ENCODE measurements at regions of chr20 and their contacts with region 1.

Region 1: DNA sequence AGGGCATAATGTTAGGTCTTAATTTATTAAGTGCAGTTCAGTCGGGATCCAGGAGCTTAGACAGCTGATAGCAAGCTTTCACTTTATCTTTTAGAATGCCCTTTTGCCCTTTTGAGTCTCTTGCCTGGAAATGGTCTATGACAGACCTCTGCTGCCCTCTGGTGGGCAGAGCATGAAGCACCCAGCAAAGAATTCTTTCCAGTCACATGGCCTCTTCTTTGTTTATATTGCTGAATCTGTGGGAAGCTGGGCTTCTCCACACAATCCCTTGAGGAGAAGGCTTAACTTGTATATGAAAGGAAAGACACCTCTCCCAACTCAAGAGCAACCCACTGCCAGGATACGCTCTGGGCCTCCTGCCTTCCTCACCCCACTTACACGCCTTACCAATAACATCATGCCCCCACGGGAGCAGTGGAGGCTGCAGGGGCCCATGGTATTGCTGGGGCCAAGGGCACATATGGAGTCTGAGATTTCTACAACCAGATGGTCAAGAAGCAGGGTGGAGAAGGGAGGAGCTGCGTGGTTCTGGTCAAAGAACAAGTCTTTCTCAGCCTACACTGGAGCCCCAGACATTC is 20.4 kb downstream of the WFDC3 start:
- DNase-seq: peak; percentile 26
- H3K4me3 ChIP-seq: no peak overlapping the region; the same call in 1 of the 2 replicates
- CTCF ChIP-seq: peak; percentile 79

Region 2: DNA sequence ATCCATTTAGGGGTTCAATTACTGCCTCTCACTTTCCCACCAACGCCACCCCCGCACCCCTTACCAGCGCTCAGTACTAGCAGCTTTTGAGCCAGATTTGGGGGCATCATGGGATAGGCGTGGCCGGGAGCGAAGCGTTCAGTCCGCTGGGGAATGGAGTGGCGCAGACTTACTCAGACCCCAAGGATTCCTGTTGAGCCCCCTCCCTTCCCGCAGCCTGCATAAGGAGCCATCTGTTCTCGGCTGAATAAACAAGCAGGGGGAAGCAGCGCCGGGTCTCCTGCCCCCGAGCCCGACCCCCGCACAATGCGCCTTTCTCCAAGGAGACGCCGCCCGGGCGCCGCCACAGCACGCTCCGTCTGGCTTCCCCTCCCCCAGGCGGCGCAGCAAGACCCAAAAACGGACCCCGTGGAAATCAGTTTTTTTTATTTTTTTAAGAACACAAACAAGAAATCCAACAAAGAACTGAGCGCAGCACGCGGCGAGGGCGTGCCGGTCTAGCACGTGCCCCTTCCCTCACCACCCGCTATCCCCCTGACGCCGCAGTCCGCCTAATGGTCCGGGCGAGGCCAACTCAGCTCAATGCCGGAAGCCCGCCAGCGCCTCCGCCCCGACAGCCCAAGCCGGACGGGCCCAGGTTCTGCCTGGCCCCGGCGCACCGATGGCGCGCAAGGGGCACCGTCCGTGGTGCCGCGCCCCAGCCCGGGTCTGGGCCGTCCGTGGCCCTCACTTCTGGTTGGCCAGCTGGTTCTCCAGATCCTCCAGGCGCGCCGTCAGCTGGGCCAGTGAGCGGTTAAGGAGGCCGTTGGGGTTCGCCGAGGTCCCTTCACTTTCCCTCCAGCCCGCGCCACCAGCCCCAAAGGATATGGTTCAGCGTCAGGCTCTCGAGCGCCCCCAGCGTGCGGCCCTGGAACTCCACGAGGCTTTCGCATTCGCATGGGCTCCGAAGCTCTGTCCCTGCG is 477.9 kb before region 1 on chr20:
- CTCF ChIA-PET with region 1: interaction called, 17 read pairs
- POLR2A ChIA-PET with region 1: no interaction called
- DNase-seq: no peak
- H3K4me3 ChIP-seq: peak overlapping the region; percentile 61
- CTCF ChIP-seq: peak; percentile 98

Region 3: GRCh38 chr20:45368221-45368980 is 402.9 kb before region 1 on chr20:
- CTCF ChIA-PET with region 1: interaction called, 41 read pairs
- POLR2A ChIA-PET with region 1: no interaction called
- DNase-seq: no peak
- H3K4me3 ChIP-seq: no peak overlapping the region
- CTCF ChIP-seq: no peak

Region 4: DNA sequence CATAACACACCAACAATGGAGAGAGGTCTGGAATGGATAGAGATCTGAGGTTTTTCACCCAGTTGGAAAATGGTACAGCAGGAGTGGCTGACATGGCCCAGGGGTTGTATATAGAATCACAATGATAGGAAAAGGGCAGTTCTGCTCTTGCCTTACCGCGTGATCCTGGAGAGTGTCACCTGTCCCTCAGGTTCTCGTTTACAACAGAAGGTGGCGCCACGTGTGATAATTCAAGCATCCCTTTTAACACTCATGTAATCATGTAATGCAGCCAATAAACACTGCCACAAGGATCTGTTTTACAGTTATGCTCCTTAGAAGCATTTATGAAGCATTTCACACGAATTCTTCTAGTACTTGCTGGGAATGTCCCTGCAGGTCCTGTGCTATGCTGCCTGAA is 314.6 kb before region 1 on chr20:
- CTCF ChIA-PET with region 1: interaction called, 28 read pairs
- POLR2A ChIA-PET with region 1: no interaction called
- DNase-seq: no peak
- H3K4me3 ChIP-seq: no peak overlapping the region
- CTCF ChIP-seq: no peak

Region 5: DNA sequence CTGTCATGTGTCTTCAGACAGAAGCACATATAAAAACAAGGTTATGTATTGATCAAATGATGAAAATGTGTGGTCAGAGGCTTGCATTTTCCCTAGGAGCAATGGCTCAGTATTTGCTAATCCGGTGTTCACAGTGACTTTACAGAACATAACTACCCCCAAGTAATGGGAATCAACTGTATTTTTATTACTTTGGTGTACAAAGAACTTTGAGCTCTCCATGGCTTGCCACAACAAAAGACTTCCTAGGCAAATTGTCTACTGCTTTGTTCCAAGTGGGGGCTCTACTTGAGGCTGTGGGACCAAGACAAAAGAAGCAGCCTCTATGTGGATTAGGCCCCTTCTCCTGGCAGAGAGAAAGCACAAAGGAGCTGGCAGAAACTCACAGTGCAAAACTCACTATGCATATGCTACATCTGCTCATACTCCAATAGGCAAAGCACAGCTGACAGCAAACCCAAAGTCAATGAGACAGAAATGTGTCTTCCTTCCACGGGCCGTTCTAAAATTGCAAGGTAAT is 193.1 kb before region 1 on chr20:
- CTCF ChIA-PET with region 1: interaction called, 13 read pairs
- POLR2A ChIA-PET with region 1: no interaction called
- DNase-seq: no peak
- H3K4me3 ChIP-seq: no peak overlapping the region
- CTCF ChIP-seq: no peak

Region 6: DNA sequence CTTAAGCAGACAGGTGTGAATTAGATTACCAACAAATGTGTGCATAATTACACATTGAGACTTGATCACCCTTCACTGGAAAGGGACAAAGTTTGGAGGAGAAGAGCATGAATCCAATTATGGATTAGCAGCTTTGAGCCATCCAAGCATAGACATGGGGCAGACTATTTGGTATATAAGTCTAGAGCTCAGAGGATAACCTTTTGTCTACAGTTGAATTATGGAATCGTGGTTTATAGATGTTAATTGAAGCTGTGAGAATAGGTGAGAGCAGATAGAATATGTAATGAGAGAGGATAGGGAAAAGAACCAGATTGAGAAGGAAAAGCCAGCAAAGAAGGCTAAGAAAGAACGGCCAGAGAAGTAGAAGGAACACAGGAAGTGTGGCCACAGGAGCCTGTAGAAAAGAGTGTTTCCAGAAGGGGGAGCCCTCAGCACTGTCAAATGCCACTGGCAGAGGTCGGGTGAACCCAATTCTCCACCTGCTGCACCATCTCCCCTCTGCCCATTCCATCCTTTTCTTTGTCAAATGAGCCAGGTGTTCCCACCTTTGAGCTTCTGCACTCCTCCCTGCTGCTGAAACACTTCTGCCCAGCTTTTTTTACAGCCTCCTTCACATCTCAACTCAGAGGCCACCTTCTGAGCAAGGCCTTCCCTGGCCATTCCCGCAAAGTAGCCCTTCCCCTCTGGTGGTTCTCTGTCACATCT is 27.8 kb after region 1 on chr20:
- CTCF ChIA-PET with region 1: interaction called, 10 read pairs
- POLR2A ChIA-PET with region 1: no interaction called
- DNase-seq: no peak
- H3K4me3 ChIP-seq: no peak overlapping the region
- CTCF ChIP-seq: peak; percentile 75

Region 7: GRCh38 chr20:46040902-46041535 is 269.7 kb after region 1 on chr20:
- CTCF ChIA-PET with region 1: no interaction called
- POLR2A ChIA-PET with region 1: no interaction called
- DNase-seq: no peak
- H3K4me3 ChIP-seq: no peak overlapping the region
- CTCF ChIP-seq: no peak